Activated CD4-positive, alpha-beta T cell treated with anti-CD3 and anti-CD28 coated beads, Interleukin-2, amount 10 ng/mL, durations not matched to agents 24 days and 14 days (primary cell): ENCODE measurements at regions of chr2 and their contacts with region 1.

Region 1: GRCh38 chr2:213015387-213016165 is 135.8 kb downstream of the IKZF2 start:
- DNase-seq: peak; percentile 81
- H3K4me3 Mint-ChIP-seq: peak overlapping the region; percentile 40
- H3K27ac Mint-ChIP-seq: peak overlapping the region; percentile 44
- H3K4me1 Mint-ChIP-seq: peaks cover 20% of the 10 kb centered on the region
- H3K27me3 Mint-ChIP-seq: peaks cover 38% of the 10 kb centered on the region

Region 2: DNA sequence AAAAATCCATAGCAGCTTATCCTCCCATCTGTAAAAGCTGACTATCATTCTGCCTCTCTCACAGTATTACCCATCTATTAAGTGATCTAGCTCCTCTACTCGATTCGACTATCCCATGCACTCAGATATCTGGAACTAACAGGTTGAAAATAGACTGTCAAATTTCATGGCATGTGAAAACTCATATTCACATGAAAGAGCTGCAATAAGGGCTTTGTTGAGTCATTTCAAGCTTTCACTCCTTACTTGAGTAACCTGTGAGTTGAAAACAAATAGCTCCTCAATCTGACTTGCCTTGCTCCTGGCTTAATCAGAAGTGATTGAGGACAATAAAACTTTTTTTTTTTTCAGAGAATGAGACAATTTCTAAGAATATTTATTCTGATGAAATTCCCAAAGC is 284.6 kb before region 1 on chr2:
- intact Hi-C with region 1: loop called (anchors 5 kb)
- DNase-seq: no peak
- H3K4me3 Mint-ChIP-seq: no peak overlapping the region
- H3K27ac Mint-ChIP-seq: no peak overlapping the region
- H3K4me1 Mint-ChIP-seq: peaks cover 2% of the 10 kb centered on the region
- H3K27me3 Mint-ChIP-seq: no peaks in the 10 kb centered on the region

Region 3: GRCh38 chr2:212815453-212815852 is 200.1 kb before region 1 on chr2:
- intact Hi-C with region 1: loop called (anchors 10 kb)
- DNase-seq: no peak
- H3K4me3 Mint-ChIP-seq: no peak overlapping the region
- H3K27ac Mint-ChIP-seq: no peak overlapping the region
- H3K4me1 Mint-ChIP-seq: peaks cover 3% of the 10 kb centered on the region
- H3K27me3 Mint-ChIP-seq: peaks cover 2% of the 10 kb centered on the region

Region 4: DNA sequence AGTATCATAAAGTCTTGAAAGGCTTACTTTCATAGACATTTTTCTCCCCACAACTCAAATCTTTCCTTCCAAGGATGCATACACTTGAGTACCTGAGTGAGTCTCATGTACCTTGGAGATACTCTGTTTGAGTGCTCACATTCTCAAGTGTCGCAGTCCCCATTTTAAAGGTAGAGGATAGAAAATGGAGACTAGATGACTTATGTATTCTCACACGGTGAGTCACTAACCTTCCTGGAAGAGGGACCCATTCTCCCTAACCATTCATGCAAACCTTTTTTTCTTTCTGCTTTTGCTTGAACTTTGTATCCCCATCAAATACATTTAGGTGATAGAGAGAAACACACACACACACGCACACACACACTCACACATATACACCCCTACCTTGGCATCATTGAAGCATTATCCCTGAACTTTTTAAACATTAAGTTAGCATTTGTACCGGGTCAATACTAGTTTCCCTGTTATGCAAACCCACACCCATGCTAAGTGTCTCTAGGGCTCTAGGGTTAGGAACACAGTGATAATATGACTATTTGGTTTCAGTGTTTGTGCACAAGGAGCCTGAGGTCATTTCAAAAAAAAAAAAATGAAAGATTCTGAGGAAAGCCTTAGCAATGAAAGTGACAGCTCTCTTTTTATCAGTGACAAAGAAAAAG is 100.3 kb before region 1 on chr2:
- intact Hi-C with region 1: loop called (anchors 5 kb)
- DNase-seq: no peak
- H3K4me3 Mint-ChIP-seq: no peak overlapping the region
- H3K27ac Mint-ChIP-seq: peak overlapping the region; percentile 3
- H3K4me1 Mint-ChIP-seq: peaks cover 7% of the 10 kb centered on the region
- H3K27me3 Mint-ChIP-seq: no peaks in the 10 kb centered on the region

Region 5: GRCh38 chr2:213119061-213119856 is 103.7 kb after region 1 on chr2:
- intact Hi-C with region 1: loop called (anchors 1 kb)
- DNase-seq: peak; percentile 58
- H3K4me3 Mint-ChIP-seq: peak overlapping the region; percentile 8
- H3K27ac Mint-ChIP-seq: peak overlapping the region; percentile 86
- H3K4me1 Mint-ChIP-seq: peaks cover 15% of the 10 kb centered on the region
- H3K27me3 Mint-ChIP-seq: peaks cover 1% of the 10 kb centered on the region

Region 6: GRCh38 chr2:213284105-213285090 is 268.8 kb after region 1 on chr2 and contains the start of gene SPAG16:
- intact Hi-C with region 1: loop called (anchors 5 kb)
- DNase-seq: peak; percentile 99
- H3K4me3 Mint-ChIP-seq: peak within 1 kb of the TSS; percentile 96
- H3K27ac Mint-ChIP-seq: peak within 1 kb of the TSS; percentile 87
- H3K4me1 Mint-ChIP-seq: peaks cover 17% of the 10 kb centered on the region
- H3K27me3 Mint-ChIP-seq: peaks cover 5% of the 10 kb centered on the region
- total RNA-seq, gene SPAG16: 6.8 and 7.2 TPM in 2 replicates

Region 7: DNA sequence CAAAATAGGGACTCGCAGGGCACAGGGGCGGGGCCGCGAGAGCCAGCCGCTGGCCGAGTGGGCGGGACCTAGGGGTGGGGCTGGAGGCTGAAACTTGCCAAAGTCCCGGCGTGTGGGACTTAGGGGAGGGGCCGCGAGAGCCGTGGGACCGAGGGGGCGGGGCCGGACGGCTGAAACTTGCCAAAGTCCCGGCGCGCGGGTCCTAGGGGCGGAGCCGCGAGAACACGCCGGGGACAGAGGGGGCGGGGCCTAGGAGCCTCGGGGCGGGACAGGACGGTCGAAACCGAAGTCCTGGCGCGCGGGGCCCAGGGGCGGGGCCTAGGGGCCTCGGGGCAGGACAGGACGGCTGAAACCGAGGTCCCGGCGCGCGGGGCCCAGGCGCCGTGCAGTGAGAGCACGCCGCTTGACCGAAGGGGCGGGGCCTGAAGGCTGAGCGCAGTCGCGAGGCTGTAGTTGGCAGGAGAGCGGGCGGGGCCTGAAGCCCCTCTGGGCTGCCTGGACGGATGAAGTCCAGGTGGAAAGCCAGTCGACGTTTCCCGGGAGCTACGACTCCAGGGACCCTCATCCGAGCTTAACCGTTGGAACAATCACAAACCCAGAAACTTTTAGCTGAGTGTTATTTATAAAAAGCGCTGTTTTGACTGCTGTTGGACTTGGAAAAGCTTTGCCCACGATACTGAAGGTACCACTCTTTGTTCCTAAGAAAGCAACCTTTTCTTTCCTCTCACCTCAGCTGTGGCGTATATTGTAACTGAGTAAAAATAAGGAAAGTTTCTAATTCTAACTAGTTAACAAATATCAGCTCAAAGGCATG is 1794.4 kb after region 1 on chr2:
- intact Hi-C with region 1: loop called (anchors 5 kb)
- DNase-seq: peak; percentile 100
- H3K4me3 Mint-ChIP-seq: peak overlapping the region; percentile 90
- H3K27ac Mint-ChIP-seq: peak overlapping the region; percentile 83
- H3K4me1 Mint-ChIP-seq: peaks cover 28% of the 10 kb centered on the region
- H3K27me3 Mint-ChIP-seq: peaks cover 20% of the 10 kb centered on the region